ENCODE measurements at regions of chr3 and their contacts with region 1.

Region 1: DNA sequence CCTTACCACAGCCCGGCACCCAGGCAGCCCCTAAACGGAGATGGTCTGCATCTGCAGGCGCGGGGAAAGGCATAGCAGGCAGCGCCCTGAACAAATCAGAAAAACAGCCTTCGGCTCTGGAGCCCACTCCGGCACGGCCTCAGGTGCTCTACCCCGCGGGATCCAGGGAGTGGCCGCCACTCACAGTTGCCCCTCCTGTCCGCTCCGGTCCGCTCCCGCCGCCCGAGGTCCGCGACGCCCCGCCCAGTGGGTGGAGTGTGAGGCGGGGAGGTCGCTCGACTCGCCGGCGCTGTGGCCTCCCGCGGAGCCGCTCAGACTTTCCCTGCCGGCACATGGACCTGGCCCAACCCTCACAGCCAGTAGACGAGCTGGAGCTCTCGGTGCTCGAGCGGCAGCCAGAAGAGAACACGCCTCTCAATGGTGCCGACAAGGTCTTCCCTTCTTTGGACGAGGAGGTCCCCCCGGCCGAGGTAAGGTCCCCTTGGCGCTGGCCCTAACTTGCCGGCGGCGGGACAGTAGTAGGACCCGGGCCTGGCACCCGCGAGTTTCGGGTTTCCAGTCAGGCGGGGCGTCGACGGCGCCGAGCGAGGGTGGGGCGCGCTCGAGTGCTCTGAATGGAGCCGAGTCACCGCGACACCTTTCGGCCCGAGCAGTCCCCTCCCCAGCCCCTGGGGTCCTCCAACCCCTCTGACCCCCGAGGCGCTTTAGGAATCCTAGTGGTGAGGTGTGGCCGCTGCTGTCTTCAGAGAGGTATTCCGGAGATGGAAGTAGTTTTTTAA is at the start of gene C3orf52:
- DNase-seq: peak; percentile 83
- ATAC-seq: peak; percentile 91
- H3K4me3 Mint-ChIP-seq: peak within 1 kb of the TSS; percentile 84
- H3K27ac Mint-ChIP-seq: peak within 1 kb of the TSS; percentile 80
- H3K4me1 Mint-ChIP-seq: peaks cover 43% of the 10 kb centered on the region
- H3K27me3 Mint-ChIP-seq: no peaks in the 10 kb centered on the region
- total RNA-seq, gene C3orf52: 8.7 to 9.3 TPM

Region 2: DNA sequence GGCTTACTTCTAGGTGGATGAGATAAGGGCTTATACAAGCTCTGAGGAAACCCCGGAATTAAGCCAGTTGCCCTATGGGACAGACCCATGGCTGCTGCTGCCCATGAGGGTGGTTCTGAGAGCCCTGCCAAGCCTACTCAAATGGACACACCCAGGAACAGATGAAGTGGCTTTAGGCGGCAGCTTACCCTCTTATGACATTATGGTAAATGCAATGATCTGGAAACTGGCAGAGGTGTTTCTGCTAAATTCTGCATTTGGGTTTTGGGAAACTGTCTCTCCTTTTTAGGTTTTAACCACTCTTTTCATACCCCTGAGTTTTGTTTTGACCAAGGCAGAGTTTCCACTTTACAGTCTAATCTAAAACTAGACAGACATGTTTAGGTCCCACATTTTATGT is 482.1 kb before region 1 on chr3:
- CTCF ChIA-PET with region 1: no interaction called
- POLR2A ChIA-PET with region 1: no interaction called
- intact Hi-C with region 1: no loop called
- DNase-seq: peak; percentile 67
- ATAC-seq: peak; percentile 64
- H3K4me3 Mint-ChIP-seq: peak overlapping the region; percentile 44
- H3K27ac Mint-ChIP-seq: peak overlapping the region; percentile 97
- H3K4me1 Mint-ChIP-seq: peaks cover 88% of the 10 kb centered on the region
- H3K27me3 Mint-ChIP-seq: no peaks in the 10 kb centered on the region

Region 3: GRCh38 chr3:112056451-112056978 is 29.8 kb before region 1 on chr3:
- CTCF ChIA-PET with region 1: no interaction called
- POLR2A ChIA-PET with region 1: no interaction called
- intact Hi-C with region 1: loop called in 1 of 2 experiments (anchors 1 kb)
- DNase-seq: peak; percentile 52
- ATAC-seq: peak; percentile 98
- H3K4me3 Mint-ChIP-seq: no peak overlapping the region
- H3K27ac Mint-ChIP-seq: peak overlapping the region; percentile 80
- H3K4me1 Mint-ChIP-seq: peaks cover 21% of the 10 kb centered on the region
- H3K27me3 Mint-ChIP-seq: peaks cover 4% of the 10 kb centered on the region

Region 4: GRCh38 chr3:112074721-112075497 is 11.4 kb before region 1 on chr3:
- CTCF ChIA-PET with region 1: interaction called, 4 read pairs
- POLR2A ChIA-PET with region 1: no interaction called
- intact Hi-C with region 1: loop called in 1 of 2 experiments (anchors 1 kb)
- DNase-seq: peak; percentile 65
- ATAC-seq: peak; percentile 96
- H3K4me3 Mint-ChIP-seq: peak overlapping the region; percentile 6
- H3K27ac Mint-ChIP-seq: peak overlapping the region; percentile 61
- H3K4me1 Mint-ChIP-seq: peaks cover 45% of the 10 kb centered on the region
- H3K27me3 Mint-ChIP-seq: no peaks in the 10 kb centered on the region

Region 5: DNA sequence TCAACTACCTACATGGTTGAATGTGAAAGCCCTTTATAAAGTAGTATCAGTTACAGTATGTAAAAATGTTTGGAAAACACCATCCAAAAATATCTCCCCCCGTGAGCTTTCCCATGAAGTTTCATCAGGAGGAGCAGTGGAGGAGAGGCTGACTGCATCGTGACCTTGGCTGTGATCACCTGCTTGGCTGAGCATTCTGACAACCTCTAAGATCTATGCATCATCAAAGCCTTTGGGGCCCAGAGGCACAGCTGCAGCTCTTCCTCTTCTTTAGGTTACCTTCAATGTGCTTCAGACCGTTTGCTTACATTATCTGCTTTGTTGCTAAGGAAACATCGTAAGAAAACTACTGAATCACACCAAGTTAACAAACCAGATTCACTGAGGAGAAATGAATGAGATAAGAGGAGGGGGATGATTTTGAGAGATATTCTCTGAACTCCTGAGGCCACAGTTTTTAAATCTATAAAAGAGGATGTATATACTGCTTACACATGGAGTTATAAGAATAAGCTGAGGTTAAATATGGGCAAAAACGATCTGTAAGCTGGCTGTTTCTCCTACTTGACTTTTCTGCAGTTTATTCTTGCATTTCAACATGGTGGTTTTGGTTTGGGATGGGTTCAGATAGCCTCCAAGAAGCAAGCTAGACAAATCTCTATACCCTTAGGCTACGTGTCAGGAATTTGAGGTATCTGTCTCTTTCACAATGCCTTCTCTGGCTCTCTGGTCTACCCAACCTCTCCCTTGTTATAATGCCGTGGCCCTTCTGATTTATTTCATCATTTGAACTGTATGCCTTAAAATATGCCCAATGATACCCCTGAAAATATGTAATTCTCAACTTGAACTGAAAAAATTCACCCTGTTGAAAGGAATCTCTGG is 42.8 kb after region 1 on chr3:
- CTCF ChIA-PET with region 1: no interaction called
- POLR2A ChIA-PET with region 1: no interaction called
- intact Hi-C with region 1: loop called in 1 of 2 experiments (anchors 2 kb)
- DNase-seq: peak; percentile 75
- ATAC-seq: peak; percentile 82
- H3K4me3 Mint-ChIP-seq: peak overlapping the region; percentile 20
- H3K27ac Mint-ChIP-seq: peak overlapping the region; percentile 69
- H3K4me1 Mint-ChIP-seq: peaks cover 82% of the 10 kb centered on the region
- H3K27me3 Mint-ChIP-seq: no peaks in the 10 kb centered on the region

Measured in activated CD4-positive, alpha-beta T cell treated with anti-CD3 and anti-CD28 coated beads for 36 hours (primary cell).